IMR-90 (cell line): ENCODE measurements at regions of chr15 and their contacts with region 1.

Region 1: GRCh38 chr15:92077353-92078085 is 224.0 kb downstream of the SLCO3A1 start:
- DNase-seq: peak; percentile 63
- ATAC-seq: peak; percentile 81
- H3K4me3 ChIP-seq: no peak overlapping the region
- H3K27ac ChIP-seq: no peak overlapping the region
- H3K4me1 ChIP-seq: no peaks in the 10 kb centered on the region
- H3K27me3 ChIP-seq: no peaks in the 10 kb centered on the region
- CTCF ChIP-seq: peak; percentile 83
- POLR2A ChIP-seq: no peak
- RAD21 ChIP-seq: peak; percentile 90

Region 2: GRCh38 chr15:91049378-91050127 is 1028.0 kb before region 1 on chr15:
- CTCF ChIA-PET with region 1: no interaction called
- POLR2A ChIA-PET with region 1: no interaction called
- dilution Hi-C with region 1: no loop called
- in situ Hi-C with region 1: no loop called
- intact Hi-C with region 1: loop called (anchors 10 kb)
- DNase-seq: peak; percentile 53
- ATAC-seq: peak; percentile 99
- H3K4me3 ChIP-seq: no peak overlapping the region
- H3K27ac ChIP-seq: no peak overlapping the region
- H3K4me1 ChIP-seq: no peaks in the 10 kb centered on the region
- H3K27me3 ChIP-seq: peaks cover 4% of the 10 kb centered on the region
- CTCF ChIP-seq: peak; percentile 58
- POLR2A ChIP-seq: no peak
- RAD21 ChIP-seq: peak; percentile 67

Region 3: DNA sequence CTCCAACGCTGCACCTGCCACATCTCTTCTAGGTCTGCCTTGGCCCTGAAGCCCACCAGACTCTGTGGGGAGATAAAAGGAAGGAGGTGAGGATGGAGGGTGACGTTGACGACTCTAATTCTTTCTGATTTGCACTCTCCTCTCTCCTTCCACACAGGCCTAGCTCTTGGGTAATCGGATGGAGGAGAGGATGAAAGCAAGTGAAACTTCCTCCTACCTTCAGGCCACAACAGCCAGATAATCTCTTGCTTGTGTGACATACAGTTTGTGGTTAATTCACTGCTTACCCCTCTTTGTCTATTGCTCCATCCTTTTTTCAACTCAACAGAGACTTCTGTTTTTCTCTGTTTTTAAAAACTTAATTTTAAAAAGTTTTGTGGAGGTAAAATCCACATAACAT is 769.3 kb before region 1 on chr15:
- CTCF ChIA-PET with region 1: no interaction called
- POLR2A ChIA-PET with region 1: no interaction called
- dilution Hi-C with region 1: no loop called
- in situ Hi-C with region 1: loop called (anchors 5 kb)
- intact Hi-C with region 1: loop called (anchors 1 kb)
- DNase-seq: no peak
- ATAC-seq: no peak
- H3K4me3 ChIP-seq: no peak overlapping the region
- H3K27ac ChIP-seq: no peak overlapping the region
- H3K4me1 ChIP-seq: no peaks in the 10 kb centered on the region
- H3K27me3 ChIP-seq: peaks cover 25% of the 10 kb centered on the region
- CTCF ChIP-seq: no peak
- POLR2A ChIP-seq: no peak
- RAD21 ChIP-seq: no peak

Region 4: GRCh38 chr15:91706322-91707032 is 371.0 kb before region 1 on chr15:
- CTCF ChIA-PET with region 1: interaction called, 10 read pairs
- POLR2A ChIA-PET with region 1: interaction called, 4 read pairs
- dilution Hi-C with region 1: no loop called
- in situ Hi-C with region 1: loop called (anchors 10 kb)
- intact Hi-C with region 1: loop called (anchors 1 kb)
- DNase-seq: peak; percentile 63
- ATAC-seq: peak; percentile 72
- H3K4me3 ChIP-seq: no peak overlapping the region
- H3K27ac ChIP-seq: no peak overlapping the region
- H3K4me1 ChIP-seq: no peaks in the 10 kb centered on the region
- H3K27me3 ChIP-seq: no peaks in the 10 kb centered on the region
- CTCF ChIP-seq: peak; percentile 71
- POLR2A ChIP-seq: no peak
- RAD21 ChIP-seq: peak; percentile 62

Region 5: DNA sequence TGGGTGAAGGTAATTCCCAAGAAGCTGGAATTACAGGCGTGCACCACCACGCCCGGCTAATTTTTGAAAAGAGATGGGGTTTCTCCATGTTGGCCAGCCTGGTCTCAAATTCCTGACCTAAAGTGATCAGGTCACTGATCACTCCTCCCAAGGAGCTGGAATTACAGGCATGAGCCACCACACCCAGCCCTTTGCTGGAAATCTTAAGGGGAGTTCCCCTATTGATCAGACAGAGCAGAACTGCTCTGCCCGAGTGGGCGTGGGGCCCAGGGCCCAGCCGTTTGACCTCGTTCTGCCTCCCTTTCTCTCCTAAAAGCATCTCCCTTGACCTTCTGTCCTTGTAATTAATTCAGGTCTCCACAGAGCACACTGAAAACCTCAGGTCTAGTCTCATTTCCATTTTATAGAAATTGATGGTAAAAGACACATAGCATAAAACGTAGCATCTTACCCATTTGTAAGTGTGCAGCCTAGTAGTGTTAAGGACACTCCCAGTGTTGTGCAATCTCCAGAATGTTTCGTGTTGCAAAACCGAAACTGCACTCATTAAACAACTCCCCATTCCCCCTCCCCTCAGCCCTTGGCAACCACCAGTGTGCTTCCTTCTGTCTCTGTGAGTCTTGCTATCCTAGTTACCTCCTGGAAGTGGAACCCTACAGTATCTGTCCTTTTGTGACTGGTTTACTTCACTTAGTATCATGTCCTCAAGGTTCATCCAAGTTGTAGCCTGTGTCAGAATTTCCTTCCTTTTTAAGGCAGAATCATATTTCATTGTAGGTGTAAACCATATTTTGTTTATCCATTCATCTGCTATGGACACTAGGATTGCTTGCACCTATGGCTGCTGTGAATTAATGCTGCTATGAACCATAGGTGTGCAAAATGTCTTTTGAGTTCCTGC is 134.6 kb before region 1 on chr15:
- CTCF ChIA-PET with region 1: no interaction called
- POLR2A ChIA-PET with region 1: no interaction called
- dilution Hi-C with region 1: no loop called
- in situ Hi-C with region 1: no loop called
- intact Hi-C with region 1: loop called (anchors 10 kb)
- DNase-seq: peak; percentile 89
- ATAC-seq: peak; percentile 93
- H3K4me3 ChIP-seq: no peak overlapping the region
- H3K27ac ChIP-seq: peak overlapping the region; percentile 21; the same call in 1 of the 2 replicates
- H3K4me1 ChIP-seq: peaks cover 5% of the 10 kb centered on the region; the same call in 1 of the 2 replicates
- H3K27me3 ChIP-seq: no peaks in the 10 kb centered on the region
- CTCF ChIP-seq: no peak
- POLR2A ChIP-seq: no peak
- RAD21 ChIP-seq: no peak

Region 6: DNA sequence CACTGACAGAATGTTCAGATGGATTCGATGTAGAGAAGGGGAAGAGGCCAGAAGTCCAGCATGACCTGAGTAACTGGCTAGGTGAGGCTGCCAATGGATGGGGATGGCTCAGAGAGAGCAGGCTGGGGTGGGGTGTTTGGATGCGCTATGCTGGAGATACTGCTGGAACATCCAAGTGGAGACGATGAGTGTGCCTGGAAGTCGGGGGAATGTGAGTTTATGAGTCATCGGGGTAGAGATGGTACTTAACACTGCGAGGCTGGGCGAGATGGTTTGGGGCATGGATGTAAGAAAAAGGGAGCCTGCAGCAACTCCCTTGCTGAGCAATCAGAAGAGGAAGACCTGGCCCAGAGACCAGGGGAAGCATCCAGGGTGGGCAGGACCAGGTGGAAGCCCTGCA is 43.3 kb before region 1 on chr15:
- CTCF ChIA-PET with region 1: no interaction called
- POLR2A ChIA-PET with region 1: no interaction called
- dilution Hi-C with region 1: no loop called
- in situ Hi-C with region 1: no loop called
- intact Hi-C with region 1: no loop called
- DNase-seq: no peak
- ATAC-seq: no peak
- H3K4me3 ChIP-seq: no peak overlapping the region
- H3K27ac ChIP-seq: no peak overlapping the region
- H3K4me1 ChIP-seq: no peaks in the 10 kb centered on the region; the same call in 1 of the 2 replicates
- H3K27me3 ChIP-seq: no peaks in the 10 kb centered on the region
- CTCF ChIP-seq: no peak
- POLR2A ChIP-seq: no peak
- RAD21 ChIP-seq: no peak